Esophagus muscularis mucosa (tissue), 4 donors: ENCODE measurements at regions of chr16 and their contacts with region 1.

Region 1: DNA sequence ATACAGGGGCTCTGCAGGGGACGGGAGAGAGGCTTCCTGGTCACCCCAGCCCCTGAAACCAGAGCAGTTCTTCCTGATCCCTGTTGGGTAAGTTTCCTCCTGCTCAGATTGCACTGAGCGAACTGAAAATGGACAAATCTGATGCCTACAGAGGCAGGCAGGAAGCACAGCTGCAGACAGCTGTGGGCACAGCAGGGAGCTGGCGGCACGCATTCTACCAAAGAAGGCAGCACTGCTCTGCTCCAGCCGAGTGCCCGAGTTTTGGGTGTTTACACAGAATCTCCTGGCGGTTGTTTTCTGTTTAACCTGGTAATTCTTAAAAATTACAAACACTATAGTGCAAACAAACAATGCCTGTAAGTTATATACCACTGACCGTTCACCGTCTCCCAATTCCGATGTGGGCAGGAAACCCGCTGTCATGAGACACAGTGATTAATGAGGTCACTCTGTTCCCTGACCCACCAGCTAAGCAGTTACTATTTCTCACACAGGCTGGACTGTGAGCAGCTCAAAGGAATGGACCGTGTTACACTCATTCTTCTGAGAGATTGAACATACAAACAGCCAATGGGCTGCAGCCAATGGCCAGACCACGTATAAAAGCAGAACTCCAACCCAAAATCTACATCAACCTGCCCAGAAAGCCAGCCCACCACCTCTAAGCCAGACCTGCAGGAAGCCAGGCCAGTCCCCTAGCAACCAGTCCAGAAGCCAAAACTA is 25.5 kb downstream of the NSMCE1 start:
- DNase-seq: no peak
- H3K4me3 ChIP-seq: peak overlapping the region; percentile 29 to 52 (median 42)
- H3K27ac ChIP-seq: peak overlapping the region; percentile 80 to 89 (median 84)
- H3K4me1 ChIP-seq: peaks cover 55 to 84% (median 81%) of the 10 kb centered on the region in 4 donors
- H3K27me3 ChIP-seq: no peaks in the 10 kb centered on the region
- CTCF ChIP-seq: peak in 1 of 3 experiments; percentile 4
- EP300 ChIP-seq: no peak
- POLR2A ChIP-seq: no peak

Region 2: DNA sequence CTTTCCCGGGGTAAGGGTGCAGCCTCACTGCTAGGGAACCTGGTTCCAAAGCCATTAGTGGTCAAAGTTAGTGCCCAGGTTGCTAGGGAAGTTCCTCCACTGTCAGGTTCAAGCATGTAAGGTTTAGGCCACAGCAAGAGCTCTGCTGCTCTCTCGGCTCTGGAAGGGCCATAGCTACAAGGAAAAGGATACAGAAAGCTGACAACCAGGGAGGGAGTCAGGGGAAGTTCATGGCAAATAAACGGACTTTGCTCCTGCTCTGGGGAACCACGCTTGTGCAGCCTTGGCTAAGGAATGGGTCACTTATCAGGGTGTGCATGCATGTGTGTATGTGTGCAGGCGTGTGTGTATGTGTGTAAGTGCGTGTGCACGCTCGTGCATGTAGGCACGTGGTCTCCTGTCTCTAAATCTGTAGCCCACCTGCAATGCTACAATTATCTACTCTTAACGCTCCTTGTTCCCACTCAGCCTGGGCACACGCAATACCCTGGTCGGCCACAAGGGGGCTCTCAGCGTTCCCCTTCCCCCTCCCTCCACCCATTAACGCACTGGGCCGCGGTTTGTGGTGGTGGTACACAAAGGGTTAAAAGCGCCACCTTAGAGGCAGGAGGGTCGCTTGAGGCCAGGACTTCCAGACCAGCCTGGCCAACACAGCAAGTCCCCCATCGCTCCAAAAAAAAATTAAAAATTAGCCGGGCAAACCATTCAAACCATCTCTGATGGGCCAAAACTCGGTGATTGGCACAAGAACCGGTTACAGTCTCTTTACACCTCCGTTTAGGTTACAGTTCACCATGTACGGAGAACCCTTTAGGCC is 88.1 kb before region 1 on chr16:
- intact Hi-C with region 1: no loop called
- DNase-seq: no peak
- H3K4me3 ChIP-seq: no peak overlapping the region
- H3K27ac ChIP-seq: no peak overlapping the region
- H3K4me1 ChIP-seq: peaks cover 5 to 6% (median 5%) of the 10 kb centered on the region in 4 donors
- H3K27me3 ChIP-seq: no peaks in the 10 kb centered on the region
- CTCF ChIP-seq: peak; percentile 87 to 99 (median 96)
- EP300 ChIP-seq: no peak
- POLR2A ChIP-seq: no peak

Region 3: GRCh38 chr16:27286451-27286850 is 43.4 kb after region 1 on chr16:
- intact Hi-C with region 1: no loop called
- DNase-seq: no peak
- H3K4me3 ChIP-seq: no peak overlapping the region
- H3K27ac ChIP-seq: peak overlapping the region; percentile 31 to 49 (median 37)
- H3K4me1 ChIP-seq: peaks cover 10 to 33% (median 30%) of the 10 kb centered on the region in 4 donors
- H3K27me3 ChIP-seq: no peaks in the 10 kb centered on the region
- CTCF ChIP-seq: no peak
- EP300 ChIP-seq: no peak
- POLR2A ChIP-seq: no peak

Region 4: DNA sequence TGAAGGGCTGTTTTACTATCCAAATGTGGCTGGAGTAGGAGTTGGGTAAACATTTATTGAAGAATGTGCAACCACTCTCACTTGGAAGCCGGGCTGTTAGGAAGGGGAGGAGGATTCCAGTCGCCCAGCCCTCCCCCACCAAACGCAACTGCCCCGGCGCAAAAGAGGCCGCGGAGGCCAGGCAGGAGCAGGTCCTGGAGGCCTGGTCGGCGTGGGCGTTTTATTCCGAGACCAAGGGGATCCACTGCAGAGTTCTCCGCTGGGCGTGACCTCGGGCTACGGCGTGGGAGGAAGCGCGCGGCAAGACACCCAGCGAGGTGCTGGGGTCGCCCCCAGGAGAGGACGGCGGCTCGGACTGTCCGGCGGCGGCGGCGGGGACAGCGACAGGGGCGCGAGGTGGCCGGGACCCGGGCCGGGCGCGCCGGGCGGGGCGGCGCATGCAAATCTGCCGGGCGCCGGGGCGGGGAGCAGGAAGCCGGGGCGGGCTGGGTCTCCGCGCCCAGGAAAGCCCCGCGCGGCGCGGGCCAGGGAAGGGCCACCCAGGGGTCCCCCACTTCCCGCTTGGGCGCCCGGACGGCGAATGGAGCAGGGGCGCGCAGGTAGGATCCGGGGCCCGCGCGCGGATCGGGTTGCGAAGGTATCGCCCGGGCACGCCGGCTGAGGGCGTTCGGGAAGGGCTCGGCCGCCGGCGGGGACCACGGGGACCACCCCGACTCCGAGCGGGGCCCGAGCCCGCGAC is 70.6 kb after region 1 on chr16 and contains the start of gene IL4R:
- intact Hi-C with region 1: loop called (anchors 5 kb)
- DNase-seq: no peak
- H3K4me3 ChIP-seq: peak within 1 kb of the TSS; percentile 75 to 97 (median 88)
- H3K27ac ChIP-seq: peak within 1 kb of the TSS; percentile 97 to 99 (median 98)
- H3K4me1 ChIP-seq: peaks cover 38 to 52% (median 49%) of the 10 kb centered on the region in 4 donors
- H3K27me3 ChIP-seq: no peaks in the 10 kb centered on the region
- CTCF ChIP-seq: no peak
- EP300 ChIP-seq: no peak
- POLR2A ChIP-seq: peak; percentile 27
- total RNA-seq, gene IL4R: 72.7 to 167 (median 116) TPM

Region 5: GRCh38 chr16:27326738-27327585 is 83.9 kb after region 1 on chr16:
- intact Hi-C with region 1: loop called (anchors 5 kb)
- DNase-seq: peak; percentile 98
- H3K4me3 ChIP-seq: peak overlapping the region in 2 of 4 donors; percentile 9 to 46
- H3K27ac ChIP-seq: peak overlapping the region; percentile 97 to 99 (median 98)
- H3K4me1 ChIP-seq: peaks cover 69 to 100% (median 100%) of the 10 kb centered on the region in 4 donors
- H3K27me3 ChIP-seq: no peaks in the 10 kb centered on the region
- CTCF ChIP-seq: peak in 2 of 3 experiments; percentile 12 to 18
- EP300 ChIP-seq: peak; percentile 93
- POLR2A ChIP-seq: no peak

Region 6: DNA sequence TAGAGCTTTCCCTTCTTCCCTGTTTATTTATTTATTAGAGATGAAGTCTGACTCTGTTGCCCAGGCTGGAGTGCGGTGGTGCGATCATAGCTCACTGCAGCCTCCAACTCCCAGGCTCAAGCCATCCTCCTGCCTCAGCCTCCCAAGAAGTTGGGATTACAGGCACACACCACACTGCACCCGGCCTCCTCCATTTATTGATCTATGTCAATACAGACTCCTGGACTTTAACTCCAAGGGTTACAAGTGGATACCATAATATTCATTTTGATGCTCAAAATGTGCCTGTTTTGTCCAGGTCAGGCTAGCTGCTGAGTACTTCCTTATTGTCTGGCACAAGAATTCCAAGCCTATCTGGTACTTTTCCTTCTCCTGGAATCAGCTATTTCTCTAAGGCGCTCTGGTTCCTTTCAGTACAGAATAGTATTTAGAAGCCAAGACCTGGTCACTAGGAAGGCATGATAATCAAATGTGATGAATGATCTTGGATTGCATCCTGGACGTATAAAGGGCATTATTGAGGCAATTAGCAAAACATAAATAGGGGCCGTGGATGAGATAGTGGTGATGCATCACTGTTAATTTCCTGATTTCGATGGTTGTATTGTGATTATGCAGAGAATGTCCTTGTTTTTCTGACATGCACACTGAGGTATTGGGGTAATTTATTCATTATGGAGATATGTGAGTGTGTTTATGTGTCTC is 92.5 kb after region 1 on chr16:
- intact Hi-C with region 1: loop called (anchors 5 kb)
- DNase-seq: no peak
- H3K4me3 ChIP-seq: peak overlapping the region; percentile 20 to 39 (median 30)
- H3K27ac ChIP-seq: peak overlapping the region; percentile 97 to 99 (median 98)
- H3K4me1 ChIP-seq: peaks cover 10 to 90% (median 84%) of the 10 kb centered on the region in 4 donors
- H3K27me3 ChIP-seq: no peaks in the 10 kb centered on the region
- CTCF ChIP-seq: no peak
- EP300 ChIP-seq: no peak
- POLR2A ChIP-seq: no peak